Sciatic nerve (tissue), 2 donors: ENCODE measurements at regions of chr17 and their contacts with region 1.

Region 1: DNA sequence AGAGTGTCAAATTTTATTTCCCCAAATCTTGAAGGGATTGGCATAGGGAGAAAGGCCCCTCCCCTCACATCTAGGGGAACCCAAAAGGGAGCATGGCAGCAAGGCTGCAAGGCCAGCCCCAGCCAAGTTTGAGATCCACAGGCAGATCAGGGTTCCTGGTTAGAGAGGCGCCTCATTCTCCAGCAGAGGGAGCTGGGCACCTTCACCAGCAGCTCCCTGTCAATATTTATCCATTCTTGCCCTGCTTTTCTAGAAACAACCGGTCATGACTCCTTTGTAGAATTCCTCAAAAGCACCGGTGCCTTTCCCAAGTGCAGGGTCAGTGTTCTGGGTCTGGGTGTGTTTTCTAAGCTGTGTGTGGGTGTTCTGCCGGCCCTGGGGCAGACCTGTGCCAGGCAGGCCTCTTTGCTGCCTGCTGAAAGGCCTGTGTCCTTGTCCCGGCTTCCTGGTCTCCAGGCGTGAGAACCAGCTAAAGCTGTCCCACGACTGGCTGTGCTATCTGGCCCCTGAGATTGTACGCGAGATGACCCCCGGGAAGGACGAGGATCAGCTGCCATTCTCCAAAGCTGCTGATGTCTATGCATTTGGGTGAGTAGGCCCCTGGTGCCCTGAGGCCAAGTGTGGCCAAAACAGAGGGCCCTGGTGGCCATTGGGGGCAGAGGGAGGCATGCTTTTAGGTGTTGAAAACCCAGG is 21.2 kb upstream of the LGALS9 start:
- DNase-seq: no peak
- ATAC-seq: peak; percentile 68

Region 2: GRCh38 chr17:27181935-27182334 is 427.8 kb before region 1 on chr17:
- intact Hi-C with region 1: no loop called
- DNase-seq: no peak
- ATAC-seq: no peak

Region 3: GRCh38 chr17:27236717-27237315 is 372.9 kb before region 1 on chr17:
- intact Hi-C with region 1: loop called (anchors 5 kb)
- DNase-seq: peak; percentile 93
- ATAC-seq: peak; percentile 78

Region 4: GRCh38 chr17:27396941-27397340 is 212.8 kb before region 1 on chr17:
- intact Hi-C with region 1: no loop called
- DNase-seq: peak; percentile 62
- ATAC-seq: peak; percentile 55

Region 5: DNA sequence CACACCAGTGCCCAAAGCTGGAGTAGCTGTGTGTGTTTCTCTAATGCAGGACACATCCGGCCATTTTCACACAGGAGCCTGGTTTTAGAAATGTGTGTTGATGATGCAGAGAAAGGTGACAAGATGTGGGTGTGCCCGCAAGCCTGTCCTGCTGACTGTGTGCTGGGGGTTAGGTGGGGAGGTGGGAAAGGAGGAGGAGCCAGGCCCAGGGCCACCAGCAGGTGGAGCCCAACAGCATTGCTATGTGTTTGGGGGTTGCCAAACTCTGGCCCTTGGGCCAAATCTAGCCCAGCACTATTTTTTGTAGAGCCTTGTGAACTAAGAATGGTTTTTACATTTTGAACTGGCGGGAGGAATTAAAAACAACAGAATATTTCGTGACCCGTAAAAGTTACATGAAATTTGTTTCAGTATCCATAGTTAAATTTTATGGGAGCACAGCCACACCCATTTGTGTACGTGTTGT is 40.5 kb before region 1 on chr17:
- intact Hi-C with region 1: no loop called
- DNase-seq: no peak
- ATAC-seq: no peak

Region 6: GRCh38 chr17:27721797-27722196 is 112.0 kb after region 1 on chr17:
- intact Hi-C with region 1: no loop called
- DNase-seq: no peak
- ATAC-seq: no peak